ENCODE measurements at regions of chr18 and their contacts with region 1.

Region 1: GRCh38 chr18:33751613-33752221 is 173.7 kb downstream of the ASXL3 start:
- DNase-seq: no peak
- H3K4me3 ChIP-seq: no peak overlapping the region
- H3K27ac ChIP-seq: no peak overlapping the region
- H3K4me1 ChIP-seq: peaks cover 0 to 23% (median 14%) of the 10 kb centered on the region in 4 donors
- H3K27me3 ChIP-seq: no peaks in the 10 kb centered on the region
- CTCF ChIP-seq: peak in 1 of 4 experiments; percentile 43
- EP300 ChIP-seq: no peak
- POLR2A ChIP-seq: no peak

Region 2: DNA sequence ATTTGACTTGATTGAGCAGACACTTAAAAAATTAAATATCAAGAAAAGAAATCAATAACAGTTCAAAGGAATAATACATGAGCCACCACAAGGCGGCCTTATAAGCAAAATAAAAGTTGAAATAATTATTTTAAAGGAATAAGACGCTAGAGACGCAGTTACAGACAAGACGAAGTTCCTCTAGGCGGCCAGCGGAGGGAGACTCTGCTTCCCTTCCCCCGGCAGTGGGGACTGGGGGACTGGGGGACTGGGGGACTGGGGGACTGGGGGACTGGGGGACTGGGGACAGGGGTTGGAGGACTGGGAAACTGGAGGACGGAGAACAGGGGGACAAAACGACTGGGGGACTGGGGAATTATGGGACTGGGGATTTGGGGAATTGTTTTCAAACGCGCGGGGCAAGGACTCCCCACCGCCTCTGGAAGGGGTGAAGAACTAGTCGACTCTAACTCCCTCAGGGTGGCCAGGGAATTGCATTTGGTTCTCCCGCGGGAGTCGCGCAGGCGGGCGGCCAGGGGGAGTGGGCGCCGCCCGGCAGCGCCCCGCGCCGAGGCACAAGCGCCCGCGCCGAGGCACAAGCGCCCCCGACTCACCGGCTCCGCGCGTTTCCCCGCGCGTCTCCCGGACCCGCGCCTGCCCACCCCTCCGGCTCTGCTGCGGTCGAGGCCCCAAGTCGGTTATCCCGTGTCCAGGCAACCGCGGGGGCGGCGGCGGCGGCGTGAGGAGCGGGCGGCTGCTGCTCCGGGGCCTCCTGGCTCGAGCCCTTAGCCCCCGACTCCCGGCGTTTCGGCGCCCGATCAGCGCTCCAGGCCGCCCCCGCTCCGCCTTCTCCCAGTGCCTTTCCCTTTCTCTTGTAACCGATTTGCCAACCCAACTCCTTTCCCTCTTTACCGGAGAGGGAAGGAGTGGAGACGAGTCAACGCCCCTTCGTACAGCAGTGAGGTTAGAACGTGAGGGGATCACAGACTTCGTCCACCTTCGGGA is 311.4 kb before region 1 on chr18 and contains the start of gene CCDC178:
- intact Hi-C with region 1: loop called (anchors 5 kb)
- DNase-seq: peak; percentile 66
- H3K4me3 ChIP-seq: peak within 1 kb of the TSS; percentile 53 to 79 (median 60)
- H3K27ac ChIP-seq: peak within 1 kb of the TSS in 3 of 4 donors; percentile 6 to 45 (median 39)
- H3K4me1 ChIP-seq: peaks cover 0 to 6% (median 6%) of the 10 kb centered on the region in 4 donors
- H3K27me3 ChIP-seq: no peaks in the 10 kb centered on the region
- CTCF ChIP-seq: peak in 1 of 4 experiments; percentile 55
- EP300 ChIP-seq: no peak
- POLR2A ChIP-seq: no peak
- total RNA-seq, gene CCDC178: under 0.01 to 1.7 (median 0.74) TPM

Region 3: DNA sequence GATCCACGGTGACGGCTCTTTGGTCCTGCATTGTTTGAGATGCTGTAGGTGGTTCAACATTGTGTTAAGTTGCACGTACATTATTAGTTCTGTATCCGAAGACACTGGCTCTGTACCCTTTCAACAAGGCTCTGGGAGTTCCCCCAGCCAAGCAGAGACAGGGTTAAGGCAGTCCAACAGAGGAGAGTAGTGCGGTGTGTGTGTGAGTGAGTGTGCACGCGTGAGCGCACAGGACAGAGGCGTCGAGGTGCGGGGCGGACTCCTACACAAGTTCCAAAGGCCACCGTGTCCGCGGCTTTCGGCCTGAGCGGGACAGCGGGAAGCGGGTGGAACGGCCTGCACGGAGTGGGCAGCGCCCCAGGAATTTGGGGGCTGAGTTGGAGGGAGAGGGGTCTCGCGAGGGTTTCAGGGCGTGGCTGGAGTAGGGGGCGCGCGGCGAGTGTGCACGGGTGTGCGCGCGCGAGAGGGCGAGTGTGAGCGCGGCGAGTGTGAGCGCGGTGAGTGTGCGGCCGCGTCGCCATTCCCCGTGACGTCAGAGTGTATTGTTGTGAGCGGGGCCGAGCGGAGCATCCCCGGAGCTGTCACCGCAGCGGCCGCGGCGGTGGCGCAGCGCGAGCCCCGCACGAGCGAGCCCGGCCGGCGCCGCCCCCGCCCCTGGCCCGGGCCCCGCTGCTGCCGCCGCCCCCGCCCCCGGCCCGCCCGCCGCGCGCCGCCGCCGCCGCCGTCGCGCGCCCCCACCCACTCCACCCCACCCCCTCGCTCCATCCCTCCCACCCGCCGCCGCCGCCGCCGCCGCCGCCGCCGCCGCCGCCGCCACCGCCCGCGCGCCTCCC is 173.8 kb before region 1 on chr18 and contains the start of gene ASXL3:
- intact Hi-C with region 1: loop called (anchors 10 kb)
- DNase-seq: peak; percentile 80
- H3K4me3 ChIP-seq: peak within 1 kb of the TSS; percentile 67 to 90 (median 82)
- H3K27ac ChIP-seq: peak within 1 kb of the TSS; percentile 80 to 97 (median 92)
- H3K4me1 ChIP-seq: peaks cover 0 to 47% (median 20%) of the 10 kb centered on the region in 4 donors
- H3K27me3 ChIP-seq: no peaks in the 10 kb centered on the region
- CTCF ChIP-seq: no peak
- EP300 ChIP-seq: no peak
- POLR2A ChIP-seq: no peak
- total RNA-seq, gene ASXL3: 3.6 to 9.1 (median 7.2) TPM

Region 4: GRCh38 chr18:33673689-33674088 is 78.0 kb before region 1 on chr18:
- intact Hi-C with region 1: no loop called
- DNase-seq: no peak
- H3K4me3 ChIP-seq: no peak overlapping the region
- H3K27ac ChIP-seq: no peak overlapping the region
- H3K4me1 ChIP-seq: no peaks in the 10 kb centered on the region
- H3K27me3 ChIP-seq: no peaks in the 10 kb centered on the region
- CTCF ChIP-seq: no peak
- EP300 ChIP-seq: no peak
- POLR2A ChIP-seq: no peak

Region 5: DNA sequence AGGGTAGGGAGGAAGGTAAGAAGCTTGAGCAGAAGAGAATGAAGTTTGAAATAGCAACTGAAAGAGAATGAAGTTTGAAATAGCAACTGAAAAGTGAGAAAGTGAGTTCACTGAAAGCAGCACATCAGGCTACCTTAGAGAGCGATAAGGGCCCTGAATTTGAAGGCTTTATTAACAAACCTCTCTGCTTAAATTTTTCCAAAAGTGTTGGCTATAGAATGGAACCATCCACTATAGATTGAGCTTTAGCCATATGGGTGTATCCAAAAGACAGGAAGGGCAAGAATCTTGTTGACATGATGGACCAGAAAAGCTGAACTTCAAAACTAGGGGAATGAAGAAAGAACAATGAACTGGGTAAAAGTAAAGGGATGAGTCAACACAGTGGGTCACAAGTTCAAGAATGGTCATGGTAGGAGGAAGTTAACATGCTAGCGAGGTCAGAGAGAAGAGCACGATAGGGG is 51.2 kb before region 1 on chr18:
- intact Hi-C with region 1: no loop called
- DNase-seq: no peak
- H3K4me3 ChIP-seq: no peak overlapping the region
- H3K27ac ChIP-seq: no peak overlapping the region
- H3K4me1 ChIP-seq: no peaks in the 10 kb centered on the region
- H3K27me3 ChIP-seq: no peaks in the 10 kb centered on the region
- CTCF ChIP-seq: no peak
- EP300 ChIP-seq: no peak
- POLR2A ChIP-seq: no peak

Measured in sigmoid colon (tissue), 7 donors.